K562 (cell line): ENCODE measurements at regions of chr2 and their contacts with region 1.

Region 1: DNA sequence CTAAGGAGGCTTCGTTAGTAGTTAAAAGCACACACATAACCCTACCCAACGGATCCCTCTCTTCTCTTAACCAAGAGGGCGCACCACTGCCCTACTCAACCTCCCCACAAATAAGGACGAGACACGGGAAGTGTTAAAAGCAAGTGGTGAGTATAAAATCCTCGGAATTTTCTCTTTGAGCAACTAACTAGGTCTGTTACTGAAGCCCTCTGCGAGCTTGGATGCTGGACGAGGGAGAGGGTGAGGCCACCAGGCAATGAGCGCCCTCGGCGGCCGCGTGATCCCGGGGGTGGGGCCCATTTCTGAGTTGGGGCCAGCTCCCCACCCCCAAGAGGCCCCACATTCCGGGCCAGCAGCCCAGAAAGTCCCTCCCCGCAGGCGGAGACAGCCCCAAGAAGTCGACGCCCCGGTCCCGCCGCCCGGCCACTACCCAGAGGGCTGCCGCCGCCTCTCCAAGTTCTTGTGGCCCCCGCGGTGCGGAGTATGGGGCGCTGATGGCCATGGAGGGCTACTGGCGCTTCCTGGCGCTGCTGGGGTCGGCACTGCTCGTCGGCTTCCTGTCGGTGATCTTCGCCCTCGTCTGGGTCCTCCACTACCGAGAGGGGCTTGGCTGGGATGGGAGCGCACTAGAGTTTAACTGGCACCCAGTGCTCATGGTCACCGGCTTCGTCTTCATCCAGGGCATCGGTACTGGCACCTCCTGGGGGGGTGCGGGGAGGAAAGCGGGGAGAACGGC is at the start of gene CYBRD1:
- DNase-seq: peak; percentile 92 to 96 (median 92)
- ATAC-seq: peak; percentile 84
- H3K4me3 ChIP-seq: peak within 1 kb of the TSS; percentile 82
- H3K27ac ChIP-seq: peak within 1 kb of the TSS; percentile 92
- H3K4me1 ChIP-seq: peaks cover 17 to 19% of the 10 kb centered on the region in 2 experiments
- H3K27me3 ChIP-seq: no peaks in the 10 kb centered on the region
- CTCF ChIP-seq: peak; percentile 14 to 36 (median 15); a peak in 4 of 6 replicates
- EP300 ChIP-seq: no peak; the same call in 1 of the 2 replicates
- POLR2A ChIP-seq: peak; percentile 89
- RAD21 ChIP-seq: peak; percentile 20 to 25; a peak in 3 of 4 replicates
- polyA plus RNA-seq, gene CYBRD1: 9.6 to 10.7 TPM

Region 2: DNA sequence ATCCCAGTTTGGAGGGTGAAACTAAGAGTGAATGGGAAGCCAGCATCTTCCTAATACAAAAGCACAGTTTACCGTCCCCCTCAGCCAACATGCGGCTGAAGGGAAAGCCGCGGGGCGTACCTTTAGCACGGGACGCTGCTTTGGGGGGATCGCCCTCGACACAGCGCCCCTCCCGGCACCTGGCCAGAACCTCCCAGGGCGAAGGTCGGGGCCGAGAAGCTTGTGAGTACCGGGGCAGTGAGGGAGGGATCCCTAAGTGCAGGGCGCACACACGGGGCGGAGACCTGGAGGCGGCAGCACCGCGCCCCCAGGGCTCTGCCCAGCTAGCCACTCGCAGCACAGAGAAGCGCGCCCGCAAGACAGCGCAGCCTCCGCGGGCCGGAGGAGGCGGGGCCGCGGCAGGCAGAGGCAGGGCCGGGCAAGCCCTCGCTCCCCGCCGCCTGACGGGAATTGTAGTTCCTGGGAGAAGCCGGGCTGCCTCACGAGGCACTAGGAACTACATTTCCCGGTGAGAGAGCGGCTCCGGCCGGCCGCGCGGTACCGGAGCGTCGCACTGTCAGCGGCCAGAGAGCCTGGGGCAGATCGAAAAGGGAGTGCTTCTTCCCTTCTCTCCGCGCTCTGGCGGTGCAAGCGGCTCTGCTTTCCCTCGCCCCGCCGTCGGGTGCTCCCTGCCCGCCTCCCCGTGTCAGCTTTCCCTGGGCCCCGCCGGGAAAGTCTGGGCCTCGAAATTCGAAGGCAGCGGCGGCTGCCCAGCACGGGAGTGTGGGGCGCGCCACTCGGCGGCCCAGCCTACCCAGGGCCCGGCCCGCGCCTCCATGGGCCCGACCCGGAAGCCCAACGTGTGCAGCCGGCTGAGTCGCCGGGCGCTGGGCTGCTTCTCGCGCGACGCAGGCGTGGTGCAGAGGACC is 88.2 kb before region 1 on chr2 and contains the starts of genes DCAF17 and METTL8:
- CTCF ChIA-PET with region 1: no interaction called
- POLR2A ChIA-PET with region 1: interaction called, 5 read pairs
- in situ Hi-C with region 1: no loop called
- intact Hi-C with region 1: loop called (anchors 1 kb)
- DNase-seq: peak; percentile 95 to 99 (median 96)
- ATAC-seq: peak; percentile 97
- H3K4me3 ChIP-seq: peak within 1 kb of the TSS; percentile 86
- H3K27ac ChIP-seq: peak within 1 kb of the TSS; percentile 94
- H3K4me1 ChIP-seq: peaks cover 13 to 18% of the 10 kb centered on the region in 2 experiments
- H3K27me3 ChIP-seq: no peaks in the 10 kb centered on the region
- CTCF ChIP-seq: peak; percentile 92 to 93 (median 92)
- EP300 ChIP-seq: peak; percentile 34; the same call in 1 of the 2 replicates
- POLR2A ChIP-seq: peak; percentile 96
- RAD21 ChIP-seq: peak; percentile 13 to 45; a peak in 3 of 4 replicates
- polyA plus RNA-seq, gene DCAF17: 10.0 to 12.0 TPM
- polyA plus RNA-seq, gene METTL8: 12.9 to 16.7 TPM

Region 3: GRCh38 chr2:171469176-171469575 is 53.0 kb before region 1 on chr2:
- CTCF ChIA-PET with region 1: no interaction called
- POLR2A ChIA-PET with region 1: interaction called, 3 read pairs
- in situ Hi-C with region 1: no loop called
- intact Hi-C with region 1: loop called (anchors 5 kb)
- DNase-seq: no peak
- ATAC-seq: no peak
- H3K4me3 ChIP-seq: no peak overlapping the region
- H3K27ac ChIP-seq: no peak overlapping the region
- H3K4me1 ChIP-seq: no peaks in the 10 kb centered on the region
- H3K27me3 ChIP-seq: no peaks in the 10 kb centered on the region
- CTCF ChIP-seq: no peak
- EP300 ChIP-seq: no peak
- POLR2A ChIP-seq: no peak
- RAD21 ChIP-seq: no peak

Region 4: DNA sequence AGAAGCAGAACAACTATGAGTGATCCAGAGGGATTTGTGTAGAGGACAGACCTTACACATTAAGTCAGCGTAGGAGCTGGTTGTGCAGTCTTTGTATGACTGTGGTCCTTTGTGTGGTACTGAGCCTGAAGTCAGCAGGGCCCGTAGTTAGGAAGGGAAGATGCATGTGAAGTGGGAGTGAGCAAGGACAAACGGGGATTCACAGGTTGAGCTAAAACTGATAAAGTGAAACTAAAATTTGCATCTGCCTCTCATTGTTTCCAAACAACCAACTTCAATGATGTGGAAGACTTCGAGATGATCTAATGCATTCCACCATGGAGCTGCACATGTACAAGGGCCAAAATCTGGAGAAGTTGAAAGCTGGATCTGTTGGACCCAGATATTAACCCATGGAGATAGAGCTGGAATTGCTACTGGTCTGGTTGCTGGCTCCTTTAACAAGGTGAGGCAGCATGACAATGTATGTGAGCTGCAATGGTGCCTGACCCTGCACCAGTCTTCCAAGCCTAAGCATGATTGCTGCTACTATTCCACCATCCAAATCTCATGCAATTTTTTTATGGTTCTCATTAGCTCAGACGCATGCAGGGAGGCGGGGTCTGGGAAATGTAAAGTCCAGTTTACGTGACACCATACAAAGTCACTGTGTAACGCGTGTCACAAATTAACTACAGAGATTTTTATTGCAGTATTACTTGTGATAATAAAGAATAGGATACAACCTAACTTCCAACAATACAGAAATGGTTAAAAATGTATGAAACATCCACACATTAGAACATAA is 12.1 kb before region 1 on chr2:
- CTCF ChIA-PET with region 1: no interaction called
- POLR2A ChIA-PET with region 1: interaction called, 51 read pairs
- in situ Hi-C with region 1: no loop called
- intact Hi-C with region 1: no loop called
- DNase-seq: no peak
- ATAC-seq: no peak
- H3K4me3 ChIP-seq: no peak overlapping the region
- H3K27ac ChIP-seq: no peak overlapping the region
- H3K4me1 ChIP-seq: peaks cover 9 to 37% of the 10 kb centered on the region in 2 experiments; a peak in 3 of 5 replicates
- H3K27me3 ChIP-seq: no peaks in the 10 kb centered on the region
- CTCF ChIP-seq: no peak
- EP300 ChIP-seq: no peak
- POLR2A ChIP-seq: no peak
- RAD21 ChIP-seq: no peak